ENCODE measurements at regions of chr1 and their contacts with region 1.

Region 1: DNA sequence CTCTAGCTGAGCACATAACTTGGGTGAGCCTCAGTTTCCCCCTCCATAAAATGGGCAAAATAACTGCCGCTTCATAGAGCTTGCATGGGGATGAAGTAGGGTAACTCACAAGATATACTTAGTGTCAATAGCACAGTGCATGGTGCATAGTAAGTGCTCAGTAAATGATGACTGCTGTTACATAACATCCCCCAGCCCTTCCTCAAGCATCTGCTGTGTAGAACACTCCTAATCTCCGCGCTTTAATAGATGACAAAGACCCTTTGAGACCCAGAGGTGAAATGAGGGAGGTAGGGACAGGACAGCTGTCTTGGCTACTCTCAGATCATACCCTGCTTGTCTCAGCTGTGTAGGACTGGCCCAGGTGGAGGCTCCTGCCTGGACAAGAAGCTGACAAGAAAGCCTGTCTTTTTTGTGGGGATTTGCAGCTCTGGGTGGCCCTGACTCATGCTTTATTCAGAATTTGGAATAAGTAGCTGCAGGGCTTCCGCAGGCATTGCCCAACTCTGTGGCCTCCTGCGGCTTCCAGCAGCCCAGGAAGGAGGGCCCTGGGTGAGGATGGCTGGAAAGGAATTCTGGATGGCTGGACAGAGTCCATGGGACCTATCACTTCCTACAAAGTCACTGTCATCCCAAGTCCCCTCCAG is 20.7 kb upstream of the PADI4 start:
- DNase-seq: peak; percentile 94
- H3K4me3 ChIP-seq: no peak overlapping the region
- H3K27ac ChIP-seq: no peak overlapping the region
- H3K4me1 ChIP-seq: peaks cover 49% of the 10 kb centered on the region
- H3K27me3 ChIP-seq: no peaks in the 10 kb centered on the region
- CTCF ChIP-seq: no peak

Region 2: GRCh38 chr1:17075470-17076255 is 211.6 kb before region 1 on chr1:
- dilution Hi-C with region 1: no loop called
- DNase-seq: no peak
- H3K4me3 ChIP-seq: no peak overlapping the region
- H3K27ac ChIP-seq: no peak overlapping the region
- H3K4me1 ChIP-seq: no peaks in the 10 kb centered on the region
- H3K27me3 ChIP-seq: no peaks in the 10 kb centered on the region
- CTCF ChIP-seq: peak; percentile 50 to 65 (median 58)

Region 3: GRCh38 chr1:17355898-17356297 is 68.6 kb after region 1 on chr1:
- dilution Hi-C with region 1: loop called (anchors 10 kb)
- DNase-seq: no peak
- H3K4me3 ChIP-seq: no peak overlapping the region
- H3K27ac ChIP-seq: no peak overlapping the region
- H3K4me1 ChIP-seq: peaks cover 3% of the 10 kb centered on the region
- H3K27me3 ChIP-seq: no peaks in the 10 kb centered on the region
- CTCF ChIP-seq: no peak

Measured in keratinocyte (primary cell).